ENCODE measurements at regions of chr4 and their contacts with region 1.

Region 1: GRCh38 chr4:85826060-85826678 is 351.2 kb downstream of the ARHGAP24 start:
- DNase-seq: no peak
- ATAC-seq: no peak
- H3K4me3 ChIP-seq: no peak overlapping the region
- H3K27ac ChIP-seq: peak overlapping the region; percentile 18 to 81 (median 62)
- H3K4me1 ChIP-seq: peaks cover 22 to 54% of the 10 kb centered on the region in 2 donors
- H3K27me3 ChIP-seq: no peaks in the 10 kb centered on the region
- CTCF ChIP-seq: no peak
- POLR2A ChIP-seq: no peak

Region 2: GRCh38 chr4:84952009-84952408 is 874.2 kb before region 1 on chr4:
- in situ Hi-C with region 1: no loop called
- intact Hi-C with region 1: loop called (anchors 10 kb)
- DNase-seq: peak; percentile 49 to 55
- ATAC-seq: peak; percentile 96 to 99
- H3K4me3 ChIP-seq: no peak overlapping the region
- H3K27ac ChIP-seq: peak overlapping the region in 3 of 4 donors; percentile 26 to 70 (median 40)
- H3K4me1 ChIP-seq: peaks cover 53 to 63% of the 10 kb centered on the region in 2 donors
- H3K27me3 ChIP-seq: no peaks in the 10 kb centered on the region
- CTCF ChIP-seq: no peak
- POLR2A ChIP-seq: no peak

Region 3: DNA sequence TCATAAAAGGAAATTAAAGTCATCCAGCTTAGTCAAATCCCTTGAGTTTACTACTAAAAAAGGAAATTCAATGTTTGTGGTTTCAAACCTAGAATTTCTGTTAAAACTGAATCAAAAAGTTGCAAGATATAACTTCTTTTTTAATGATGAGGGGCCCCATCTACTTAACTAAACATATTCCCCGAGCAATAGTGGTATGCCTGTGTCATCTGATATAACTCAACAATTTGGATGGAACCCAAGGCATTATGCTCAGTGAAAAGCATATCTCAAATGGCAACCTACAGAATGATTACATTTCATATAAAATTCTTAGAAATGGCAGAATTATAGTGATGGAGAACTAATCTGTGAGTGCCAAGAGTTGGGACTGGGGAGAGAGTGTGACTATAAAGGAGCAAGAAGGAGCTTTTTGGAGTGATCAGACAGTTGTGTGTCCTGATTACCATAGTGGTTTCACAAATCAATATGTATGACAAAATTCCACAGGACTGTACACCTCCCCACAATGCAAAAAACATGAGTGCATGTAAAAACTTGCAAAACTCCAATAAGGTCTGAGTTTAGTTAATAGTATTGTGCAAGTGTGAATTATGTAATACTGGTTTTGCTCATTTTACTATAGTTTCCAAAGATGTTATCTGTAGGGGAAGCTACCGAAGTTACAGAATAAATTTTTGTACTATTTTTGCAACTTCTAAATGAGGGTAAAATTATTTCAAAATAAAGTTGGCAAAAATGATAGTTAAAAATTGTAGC is 28.0 kb before region 1 on chr4:
- in situ Hi-C with region 1: no loop called
- intact Hi-C with region 1: loop called (anchors 2 kb)
- DNase-seq: no peak
- ATAC-seq: no peak
- H3K4me3 ChIP-seq: no peak overlapping the region
- H3K27ac ChIP-seq: no peak overlapping the region
- H3K4me1 ChIP-seq: peaks cover 0 to 5% of the 10 kb centered on the region in 2 donors
- H3K27me3 ChIP-seq: no peaks in the 10 kb centered on the region
- CTCF ChIP-seq: no peak
- POLR2A ChIP-seq: no peak

Region 4: GRCh38 chr4:85870298-85871083 is 44.3 kb after region 1 on chr4:
- in situ Hi-C with region 1: no loop called
- intact Hi-C with region 1: loop called (anchors 5 kb)
- DNase-seq: no peak
- ATAC-seq: no peak
- H3K4me3 ChIP-seq: no peak overlapping the region
- H3K27ac ChIP-seq: no peak overlapping the region
- H3K4me1 ChIP-seq: peaks cover 0 to 28% of the 10 kb centered on the region in 2 donors
- H3K27me3 ChIP-seq: no peaks in the 10 kb centered on the region
- CTCF ChIP-seq: no peak
- POLR2A ChIP-seq: no peak

Region 5: DNA sequence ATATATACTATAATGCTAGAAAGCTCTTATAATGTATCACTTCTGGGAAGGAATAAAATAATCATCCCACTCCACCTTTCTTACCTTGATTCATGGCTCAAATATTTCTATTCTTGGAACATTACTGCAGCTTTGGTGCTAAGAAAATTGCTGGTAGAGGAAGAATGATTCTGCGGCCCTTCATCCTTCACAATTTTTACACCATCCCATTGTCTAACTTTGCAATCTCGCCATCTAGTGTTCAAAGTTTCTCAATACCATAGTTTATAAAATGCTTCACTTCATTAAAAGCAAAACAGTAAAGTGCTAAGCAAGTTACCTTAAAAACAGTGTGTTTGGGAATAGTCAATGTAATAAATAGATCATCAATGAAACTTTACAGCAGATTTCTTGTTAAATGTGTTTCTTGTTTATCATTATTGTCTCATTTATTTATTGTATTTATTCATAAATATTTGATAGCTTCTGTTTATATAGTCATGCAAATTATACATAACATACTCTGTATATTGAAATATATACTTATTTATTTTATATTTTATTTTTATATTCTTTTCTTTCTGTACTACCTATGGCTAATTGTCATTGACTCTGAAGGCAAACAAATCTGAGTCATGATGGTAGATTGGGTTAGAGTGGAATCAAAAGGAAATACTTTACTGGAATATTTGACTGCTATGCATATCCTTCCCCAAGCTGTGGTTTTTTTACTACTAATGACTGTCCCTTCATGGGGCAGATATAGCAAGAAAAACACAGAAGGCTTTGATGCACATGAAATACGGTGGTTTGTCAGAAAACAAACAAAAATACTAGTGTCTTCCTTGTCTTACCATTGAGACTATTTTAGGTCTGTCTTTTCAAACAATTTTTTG is 143.0 kb after region 1 on chr4:
- in situ Hi-C with region 1: no loop called
- intact Hi-C with region 1: loop called (anchors 10 kb)
- DNase-seq: no peak
- ATAC-seq: peak; percentile 64 to 72
- H3K4me3 ChIP-seq: no peak overlapping the region
- H3K27ac ChIP-seq: no peak overlapping the region
- H3K4me1 ChIP-seq: peaks cover 0 to 7% of the 10 kb centered on the region in 2 donors
- H3K27me3 ChIP-seq: no peaks in the 10 kb centered on the region
- CTCF ChIP-seq: peak in 4 of 5 experiments; percentile 43 to 62 (median 50)
- POLR2A ChIP-seq: no peak

Region 6: DNA sequence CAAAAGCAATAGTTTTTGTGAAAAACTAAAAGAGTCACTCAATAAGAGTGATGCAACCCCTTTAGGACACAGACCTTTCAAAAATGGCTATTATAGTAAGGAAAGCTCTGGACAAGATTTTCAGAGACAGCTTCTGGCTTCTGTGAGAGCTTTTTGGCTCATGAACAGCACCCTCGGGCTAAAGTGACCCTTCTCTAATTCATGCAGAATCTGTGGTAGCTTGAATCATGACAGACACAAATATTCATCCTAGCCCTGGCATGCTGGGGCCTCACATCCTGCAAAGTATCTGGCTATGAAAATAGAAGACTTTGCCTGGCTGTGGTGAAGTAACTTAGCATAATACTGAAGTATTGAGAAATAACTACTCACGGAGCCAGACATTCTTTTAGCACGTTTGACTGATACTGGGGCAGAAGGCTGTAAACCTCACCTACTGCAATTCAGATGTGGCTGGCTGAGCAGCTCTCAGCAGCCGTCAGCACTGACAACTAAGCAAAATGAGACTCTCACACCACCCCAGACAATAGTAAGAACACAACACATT is 206.4 kb after region 1 on chr4:
- in situ Hi-C with region 1: no loop called
- intact Hi-C with region 1: loop called (anchors 10 kb)
- DNase-seq: peak in 1 of 2 donors; percentile 37
- ATAC-seq: peak; percentile 87 to 93
- H3K4me3 ChIP-seq: peak overlapping the region in 2 of 4 donors; percentile 16 to 21
- H3K27ac ChIP-seq: peak overlapping the region; percentile 67 to 79 (median 72)
- H3K4me1 ChIP-seq: peaks cover 6 to 10% of the 10 kb centered on the region in 2 donors
- H3K27me3 ChIP-seq: no peaks in the 10 kb centered on the region
- CTCF ChIP-seq: no peak
- POLR2A ChIP-seq: no peak

Region 7: GRCh38 chr4:86223472-86223871 is 397.3 kb after region 1 on chr4:
- in situ Hi-C with region 1: no loop called
- intact Hi-C with region 1: no loop called
- DNase-seq: no peak
- ATAC-seq: no peak
- H3K4me3 ChIP-seq: no peak overlapping the region
- H3K27ac ChIP-seq: no peak overlapping the region
- H3K4me1 ChIP-seq: no peaks in the 10 kb centered on the region
- H3K27me3 ChIP-seq: no peaks in the 10 kb centered on the region
- CTCF ChIP-seq: no peak
- POLR2A ChIP-seq: no peak